ENCODE measurements at regions of chr19 and their contacts with region 1.

Region 1: GRCh38 chr19:43765109-43765876 is 10.5 kb upstream of the SMG9 start:
- DNase-seq: peak; percentile 90 to 95
- H3K4me3 ChIP-seq: peak overlapping the region; percentile 6; the same call in 1 of the 2 replicates
- H3K27ac ChIP-seq: peak overlapping the region; percentile 88
- H3K4me1 ChIP-seq: peaks cover 39% of the 10 kb centered on the region
- H3K27me3 ChIP-seq: no peaks in the 10 kb centered on the region
- CTCF ChIP-seq: no peak

Region 2: GRCh38 chr19:43700395-43701000 is 64.8 kb before region 1 on chr19:
- CTCF ChIA-PET with region 1: no interaction called
- POLR2A ChIA-PET with region 1: no interaction called
- intact Hi-C with region 1: no loop called
- DNase-seq: peak in 1 of 2 experiments; percentile 61
- H3K4me3 ChIP-seq: peak overlapping the region; percentile 44; the same call in 1 of the 2 replicates
- H3K27ac ChIP-seq: peak overlapping the region; percentile 80
- H3K4me1 ChIP-seq: peaks cover 36% of the 10 kb centered on the region
- H3K27me3 ChIP-seq: no peaks in the 10 kb centered on the region
- CTCF ChIP-seq: no peak

Region 3: DNA sequence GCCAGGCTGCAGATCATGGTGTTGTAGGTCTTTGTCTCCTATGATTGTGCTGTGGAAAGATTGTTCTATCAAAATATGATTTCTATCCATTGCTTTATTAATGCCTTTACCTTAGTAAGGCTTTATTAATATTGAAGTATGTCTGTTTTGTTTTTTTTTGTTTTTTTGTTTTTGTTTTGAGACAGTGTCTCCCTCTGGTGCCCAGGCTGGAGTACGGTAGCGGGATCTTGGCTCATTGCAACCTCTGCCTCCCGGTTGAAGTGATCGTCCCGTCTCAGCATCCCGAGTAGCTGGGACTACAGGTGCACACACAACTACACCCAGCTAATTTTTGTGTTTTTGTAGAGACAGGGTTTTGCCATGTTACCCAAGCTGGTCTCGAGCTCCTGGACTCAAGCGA is 41.7 kb before region 1 on chr19:
- CTCF ChIA-PET with region 1: no interaction called
- POLR2A ChIA-PET with region 1: interaction called, 10 read pairs
- intact Hi-C with region 1: no loop called
- DNase-seq: no peak
- H3K4me3 ChIP-seq: no peak overlapping the region
- H3K27ac ChIP-seq: no peak overlapping the region
- H3K4me1 ChIP-seq: no peaks in the 10 kb centered on the region
- H3K27me3 ChIP-seq: no peaks in the 10 kb centered on the region
- CTCF ChIP-seq: peak; percentile 62

Region 4: GRCh38 chr19:43743022-43743421 is 22.3 kb before region 1 on chr19:
- CTCF ChIA-PET with region 1: interaction called, 10 read pairs
- POLR2A ChIA-PET with region 1: no interaction called
- intact Hi-C with region 1: no loop called
- DNase-seq: no peak
- H3K4me3 ChIP-seq: no peak overlapping the region
- H3K27ac ChIP-seq: no peak overlapping the region
- H3K4me1 ChIP-seq: peaks cover 22% of the 10 kb centered on the region
- H3K27me3 ChIP-seq: no peaks in the 10 kb centered on the region
- CTCF ChIP-seq: no peak

Region 5: DNA sequence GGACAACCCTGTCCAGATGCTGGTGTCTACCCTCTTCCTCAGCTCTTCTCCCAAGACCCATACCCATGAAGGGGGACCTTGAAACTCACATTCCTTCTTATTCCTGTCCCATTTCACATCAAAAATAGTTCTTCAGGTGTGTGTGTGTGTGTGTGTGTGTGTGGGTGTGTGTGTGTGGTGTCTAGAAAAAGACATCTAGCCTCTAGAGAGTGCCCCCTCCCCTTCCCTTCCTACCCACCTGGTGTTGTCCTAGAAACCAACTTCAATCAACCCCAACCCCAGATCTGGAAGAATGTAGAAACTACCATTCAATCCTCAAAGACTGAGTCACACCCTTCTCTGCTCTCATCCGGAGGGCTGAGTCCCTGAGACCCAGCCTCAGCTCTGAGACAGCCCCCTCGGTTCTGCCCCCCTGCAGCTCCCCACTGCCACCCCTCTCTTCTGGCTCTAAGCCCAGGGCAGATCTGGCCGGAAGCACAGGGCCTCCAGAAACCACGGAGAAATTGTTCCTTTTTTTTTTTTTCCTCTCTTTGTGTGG is 11.9 kb after region 1 on chr19:
- CTCF ChIA-PET with region 1: interaction called, 18 read pairs
- POLR2A ChIA-PET with region 1: interaction called, 5 read pairs
- intact Hi-C with region 1: loop called (anchors 1 kb)
- DNase-seq: peak; percentile 74 to 79
- H3K4me3 ChIP-seq: peak overlapping the region; percentile 62; the same call in 1 of the 2 replicates
- H3K27ac ChIP-seq: peak overlapping the region; percentile 88
- H3K4me1 ChIP-seq: peaks cover 42% of the 10 kb centered on the region
- H3K27me3 ChIP-seq: no peaks in the 10 kb centered on the region
- CTCF ChIP-seq: no peak

Region 6: DNA sequence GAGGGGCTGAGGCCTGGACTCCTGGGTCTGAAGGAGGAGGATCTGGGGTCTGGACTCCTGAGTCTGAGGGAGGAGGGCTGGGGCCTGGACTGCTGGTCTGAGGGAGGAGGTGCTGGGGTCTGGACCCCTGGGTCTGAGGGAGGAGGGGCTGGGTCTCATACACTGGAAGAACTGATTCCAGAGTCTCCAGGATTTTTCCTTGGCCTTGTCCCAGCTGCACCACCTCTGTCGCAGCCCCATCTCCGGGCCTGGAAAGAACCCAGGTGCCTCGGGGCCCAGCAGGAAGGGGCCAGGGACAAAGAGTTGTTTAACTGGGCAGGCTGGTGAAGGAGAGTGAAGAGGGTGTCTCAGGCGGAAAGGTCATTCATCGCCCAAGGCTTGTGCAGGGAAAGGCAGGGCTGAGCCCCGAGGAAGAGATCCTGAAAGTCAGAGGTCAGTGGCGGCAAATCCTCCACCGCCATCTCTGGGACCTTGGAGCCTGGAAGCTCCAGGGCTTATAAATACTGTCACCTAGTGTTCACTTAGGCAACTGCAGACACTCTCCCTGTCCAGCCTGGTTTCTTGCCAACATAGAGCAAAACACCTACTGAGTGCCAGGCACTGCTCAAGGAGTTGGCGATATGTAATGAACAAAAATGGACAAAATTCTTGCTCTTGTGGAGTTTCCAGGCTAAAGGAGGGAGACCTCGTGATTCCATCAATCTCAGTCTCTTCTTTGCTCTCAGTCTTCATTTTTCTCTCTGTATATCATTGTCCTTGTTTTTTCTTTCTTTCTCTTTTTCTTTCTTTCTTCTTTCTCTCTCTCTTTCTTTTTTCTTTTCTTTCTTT is 19.9 kb after region 1 on chr19:
- CTCF ChIA-PET with region 1: no interaction called
- POLR2A ChIA-PET with region 1: interaction called, 5 read pairs
- intact Hi-C with region 1: loop called (anchors 2 kb)
- DNase-seq: peak; percentile 86 to 91
- H3K4me3 ChIP-seq: peak overlapping the region; percentile 16; the same call in 1 of the 2 replicates
- H3K27ac ChIP-seq: peak overlapping the region; percentile 70
- H3K4me1 ChIP-seq: peaks cover 43% of the 10 kb centered on the region
- H3K27me3 ChIP-seq: no peaks in the 10 kb centered on the region
- CTCF ChIP-seq: peak; percentile 97